ENCODE measurements at regions of chr2 and their contacts with region 1.

Region 1: GRCh38 chr2:96501471-96501874 is 3.7 kb downstream of the NEURL3 start:
- DNase-seq: no peak
- ATAC-seq: no peak
- H3K4me3 ChIP-seq: no peak overlapping the region
- H3K27ac ChIP-seq: no peak overlapping the region
- H3K4me1 ChIP-seq: peaks cover 0 to 13% of the 10 kb centered on the region in 2 experiments; a peak in 1 of 5 replicates
- H3K27me3 ChIP-seq: peaks cover 18 to 86% of the 10 kb centered on the region in 2 experiments; a peak in 4 of 5 replicates
- CTCF ChIP-seq: no peak
- EP300 ChIP-seq: no peak
- POLR2A ChIP-seq: no peak
- RAD21 ChIP-seq: no peak

Region 2: GRCh38 chr2:96131152-96131812 is 370.2 kb before region 1 on chr2:
- CTCF ChIA-PET with region 1: no interaction called
- POLR2A ChIA-PET with region 1: no interaction called
- in situ Hi-C with region 1: loop called (anchors 5 kb)
- intact Hi-C with region 1: no loop called
- DNase-seq: no peak
- ATAC-seq: no peak
- H3K4me3 ChIP-seq: no peak overlapping the region
- H3K27ac ChIP-seq: no peak overlapping the region
- H3K4me1 ChIP-seq: peaks cover 0 to 11% of the 10 kb centered on the region in 2 experiments; a peak in 2 of 5 replicates
- H3K27me3 ChIP-seq: peaks cover 53 to 77% of the 10 kb centered on the region in 2 experiments
- CTCF ChIP-seq: no peak
- EP300 ChIP-seq: no peak
- POLR2A ChIP-seq: no peak
- RAD21 ChIP-seq: no peak

Measured in K562 (cell line).